IMR-90 (cell line): ENCODE measurements at regions of chr3 and their contacts with region 1.

Region 1: GRCh38 chr3:8963137-8963869 is at the start of gene RAD18:
- DNase-seq: peak; percentile 89
- ATAC-seq: peak; percentile 97
- H3K4me3 ChIP-seq: peak within 1 kb of the TSS; percentile 78
- H3K27ac ChIP-seq: peak within 1 kb of the TSS; percentile 55
- H3K4me1 ChIP-seq: peaks cover 5% of the 10 kb centered on the region
- H3K27me3 ChIP-seq: 0 out of 2 replicates have a peak, but pooled peaks cover 2% of the 10 kb centered on the region
- CTCF ChIP-seq: no peak
- POLR2A ChIP-seq: peak; percentile 57
- RAD21 ChIP-seq: no peak
- total RNA-seq, gene RAD18: 17.2 and 22.2 TPM in 2 replicates

Region 2: DNA sequence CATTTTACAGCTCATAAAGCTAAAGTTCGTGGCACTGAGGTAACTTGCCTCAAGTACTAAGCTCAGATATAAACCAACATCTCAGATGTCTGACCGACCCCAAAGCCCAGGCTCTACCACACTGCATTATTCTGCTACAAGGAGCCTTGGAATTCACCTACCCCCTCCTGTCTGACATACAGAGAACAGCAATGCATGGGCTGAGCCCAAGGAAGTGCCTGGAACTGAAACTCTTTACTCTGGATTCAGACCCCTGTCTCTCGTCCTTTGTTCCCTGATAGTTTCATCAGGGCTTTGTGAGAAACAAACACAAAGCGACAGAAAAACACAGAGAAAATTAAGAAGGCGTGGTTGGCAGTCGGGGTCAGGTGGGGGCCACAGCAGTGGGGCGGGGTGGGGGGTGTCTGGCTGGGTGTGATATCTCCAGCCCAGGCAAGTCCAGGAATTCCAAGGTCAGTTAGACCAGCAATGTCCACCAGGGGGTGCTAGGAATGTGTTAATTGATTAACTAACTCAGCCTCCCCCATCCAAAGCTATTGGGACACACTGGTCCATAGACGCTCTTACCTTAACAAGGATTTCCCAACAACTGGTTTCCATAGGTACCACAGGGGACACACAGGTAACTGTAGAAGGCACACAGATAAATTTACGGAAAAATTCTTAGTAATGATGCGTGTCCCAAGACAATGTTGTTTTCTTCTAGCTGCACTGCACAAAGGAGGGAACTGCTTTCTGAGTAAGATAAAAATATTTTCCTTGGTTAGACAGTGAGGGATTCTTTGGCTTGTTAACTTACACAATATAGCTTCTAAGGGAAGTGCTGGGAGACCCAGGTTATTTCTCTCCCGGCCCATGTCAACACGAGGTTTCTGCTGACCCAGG is 299.9 kb before region 1 on chr3:
- CTCF ChIA-PET with region 1: no interaction called
- POLR2A ChIA-PET with region 1: no interaction called
- dilution Hi-C with region 1: no loop called
- in situ Hi-C with region 1: no loop called
- intact Hi-C with region 1: loop called (anchors 10 kb)
- DNase-seq: peak; percentile 61
- ATAC-seq: peak; percentile 67
- H3K4me3 ChIP-seq: no peak overlapping the region
- H3K27ac ChIP-seq: no peak overlapping the region
- H3K4me1 ChIP-seq: peaks cover 8% of the 10 kb centered on the region
- H3K27me3 ChIP-seq: no peaks in the 10 kb centered on the region; the same call in 1 of the 2 replicates
- CTCF ChIP-seq: peak; percentile 58
- POLR2A ChIP-seq: no peak
- RAD21 ChIP-seq: peak; percentile 55

Region 3: GRCh38 chr3:8776406-8776805 is 186.9 kb before region 1 on chr3:
- CTCF ChIA-PET with region 1: no interaction called
- POLR2A ChIA-PET with region 1: no interaction called
- dilution Hi-C with region 1: no loop called
- in situ Hi-C with region 1: loop called (anchors 10 kb)
- intact Hi-C with region 1: no loop called
- DNase-seq: peak; percentile 92
- ATAC-seq: peak; percentile 80
- H3K4me3 ChIP-seq: no peak overlapping the region
- H3K27ac ChIP-seq: 0 out of 2 replicates have a peak overlapping the region, but pooled peaks have one; percentile 33
- H3K4me1 ChIP-seq: peaks cover 4% of the 10 kb centered on the region
- H3K27me3 ChIP-seq: no peaks in the 10 kb centered on the region
- CTCF ChIP-seq: no peak
- POLR2A ChIP-seq: no peak
- RAD21 ChIP-seq: no peak